ENCODE measurements at regions of chr17 and their contacts with region 1.

Region 1: GRCh38 chr17:60091908-60092331 is 13.2 kb upstream of the HEATR6 start:
- DNase-seq: no peak

Region 2: GRCh38 chr17:60231234-60231633 is 139.3 kb after region 1 on chr17:
- intact Hi-C with region 1: no loop called
- DNase-seq: no peak

Region 3: DNA sequence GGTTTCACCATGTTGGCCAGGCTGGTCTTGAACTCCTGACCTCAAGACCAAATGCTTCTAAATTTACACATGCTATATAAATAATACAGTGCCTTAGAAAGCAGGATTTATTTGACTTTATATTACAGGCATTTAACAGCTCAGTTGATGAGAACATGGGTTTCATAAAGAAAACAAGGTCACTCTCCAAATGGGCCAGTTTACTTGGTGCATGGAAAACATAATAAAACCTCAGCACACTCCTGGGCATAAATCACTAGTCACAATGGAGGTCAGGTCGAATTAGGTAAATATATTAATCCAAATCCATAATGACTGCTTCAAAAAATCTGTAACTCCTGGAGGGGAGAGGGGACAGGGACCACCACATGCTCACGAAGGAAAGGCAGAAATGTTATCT is 409.7 kb after region 1 on chr17:
- intact Hi-C with region 1: loop called in 1 of 2 experiments (anchors 5 kb)
- DNase-seq: no peak